ENCODE measurements at regions of chr12 and their contacts with region 1.

Region 1: DNA sequence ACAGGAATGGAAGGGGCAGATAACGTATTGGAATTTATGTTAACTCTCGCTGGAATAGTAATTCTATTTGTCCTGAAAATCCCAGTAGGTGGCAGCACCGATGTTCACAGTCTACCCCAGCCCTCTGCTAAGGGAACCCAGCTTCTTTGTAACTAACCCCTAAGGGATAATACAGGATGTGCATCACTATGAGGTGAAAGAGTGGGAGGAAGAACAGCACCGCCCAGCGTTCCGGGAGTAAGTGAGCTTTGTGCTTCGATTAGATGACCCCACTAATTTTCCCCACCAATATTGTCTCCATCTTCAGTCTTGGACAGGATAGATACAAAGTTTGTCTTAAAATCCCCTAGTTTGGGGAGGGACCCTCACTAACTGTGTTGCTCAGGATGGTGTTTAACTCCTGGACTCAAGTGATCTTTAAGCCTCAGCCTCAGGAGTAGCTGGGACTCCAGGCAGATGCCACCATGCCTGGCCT is 2.7 kb downstream of the SLC2A3 start:
- DNase-seq: peak; percentile 96
- ATAC-seq: peak; percentile 84
- H3K4me3 ChIP-seq: peak overlapping the region; percentile 97
- H3K27ac ChIP-seq: peak overlapping the region; percentile 68
- H3K4me1 ChIP-seq: peaks cover 5% of the 10 kb centered on the region
- H3K27me3 ChIP-seq: no peaks in the 10 kb centered on the region
- CTCF ChIP-seq: peak; percentile 77
- POLR2A ChIP-seq: peak; percentile 85
- RAD21 ChIP-seq: peak; percentile 83

Region 2: DNA sequence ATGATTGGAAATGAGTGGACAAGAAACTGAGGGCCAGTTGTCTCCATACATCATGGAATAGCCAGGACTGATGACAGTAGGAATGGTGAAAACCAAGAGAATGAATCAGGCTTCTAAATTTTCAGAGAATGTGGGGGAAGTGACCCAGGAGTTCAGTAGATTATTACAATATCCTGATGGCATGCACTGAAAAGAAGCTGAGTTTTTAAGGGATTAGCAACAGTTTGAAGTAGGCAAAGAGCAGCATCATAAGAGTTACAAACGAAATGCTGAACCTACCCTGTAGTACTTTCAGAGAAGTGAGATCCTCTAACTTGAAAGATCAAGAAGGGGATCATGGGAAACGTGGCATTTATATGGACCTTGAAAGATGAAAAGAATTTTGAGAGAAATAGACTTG is 73.7 kb before region 1 on chr12:
- CTCF ChIA-PET with region 1: interaction called, 10 read pairs
- POLR2A ChIA-PET with region 1: no interaction called
- dilution Hi-C with region 1: no loop called
- in situ Hi-C with region 1: no loop called
- intact Hi-C with region 1: loop called (anchors 1 kb)
- DNase-seq: peak; percentile 81
- ATAC-seq: peak; percentile 58
- H3K4me3 ChIP-seq: no peak overlapping the region
- H3K27ac ChIP-seq: peak overlapping the region; percentile 43
- H3K4me1 ChIP-seq: peaks cover 3% of the 10 kb centered on the region
- H3K27me3 ChIP-seq: no peaks in the 10 kb centered on the region
- CTCF ChIP-seq: no peak
- POLR2A ChIP-seq: no peak
- RAD21 ChIP-seq: no peak

Region 3: DNA sequence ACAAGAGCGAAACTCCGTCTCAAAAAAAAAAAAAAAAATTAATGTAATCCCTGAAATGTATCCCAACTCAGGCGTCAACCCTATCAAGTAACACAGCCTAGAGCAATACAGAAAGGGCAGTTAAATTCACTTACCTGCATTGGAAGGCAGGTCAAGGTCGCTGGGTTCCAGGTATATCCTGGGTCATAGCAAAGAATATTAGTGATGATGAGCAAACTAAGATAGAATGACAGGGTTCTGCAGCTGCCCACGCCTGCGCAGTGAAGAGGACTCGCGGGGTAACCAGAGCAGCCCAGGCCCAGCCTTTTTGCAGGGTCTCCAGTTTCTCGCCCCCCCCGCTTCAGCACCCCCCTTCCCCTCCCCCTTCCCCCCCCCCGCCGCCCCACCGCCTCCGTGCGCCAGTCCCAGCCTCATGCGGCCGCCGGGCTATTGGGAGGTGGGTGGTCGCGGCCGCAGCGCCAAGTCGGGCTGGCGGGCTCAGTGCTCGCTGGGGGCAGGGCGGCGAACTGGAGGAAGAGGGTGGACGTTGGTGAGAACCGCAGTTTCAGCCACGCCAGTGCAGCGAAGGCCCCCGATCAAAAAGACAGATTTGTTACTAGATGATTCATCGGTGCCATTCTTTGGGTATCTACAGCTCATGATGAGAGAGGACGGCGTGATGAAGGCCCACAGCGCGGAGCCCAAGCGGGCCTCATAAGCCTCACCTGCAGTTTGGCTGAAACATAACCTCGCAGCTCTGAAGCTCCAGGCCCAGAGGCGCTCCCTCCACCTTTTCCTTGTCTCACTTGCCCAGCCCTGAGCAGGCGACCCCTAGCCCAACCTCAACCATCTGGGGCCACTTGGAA is 17.5 kb before region 1 on chr12:
- CTCF ChIA-PET with region 1: no interaction called
- POLR2A ChIA-PET with region 1: interaction called, 10 read pairs
- dilution Hi-C with region 1: no loop called
- in situ Hi-C with region 1: no loop called
- intact Hi-C with region 1: no loop called
- DNase-seq: no peak
- ATAC-seq: peak; percentile 54
- H3K4me3 ChIP-seq: peak overlapping the region; percentile 26; the same call in 1 of the 2 replicates
- H3K27ac ChIP-seq: no peak overlapping the region
- H3K4me1 ChIP-seq: peaks cover 2% of the 10 kb centered on the region; the same call in 1 of the 2 replicates
- H3K27me3 ChIP-seq: no peaks in the 10 kb centered on the region
- CTCF ChIP-seq: no peak
- POLR2A ChIP-seq: no peak
- RAD21 ChIP-seq: no peak

Region 4: DNA sequence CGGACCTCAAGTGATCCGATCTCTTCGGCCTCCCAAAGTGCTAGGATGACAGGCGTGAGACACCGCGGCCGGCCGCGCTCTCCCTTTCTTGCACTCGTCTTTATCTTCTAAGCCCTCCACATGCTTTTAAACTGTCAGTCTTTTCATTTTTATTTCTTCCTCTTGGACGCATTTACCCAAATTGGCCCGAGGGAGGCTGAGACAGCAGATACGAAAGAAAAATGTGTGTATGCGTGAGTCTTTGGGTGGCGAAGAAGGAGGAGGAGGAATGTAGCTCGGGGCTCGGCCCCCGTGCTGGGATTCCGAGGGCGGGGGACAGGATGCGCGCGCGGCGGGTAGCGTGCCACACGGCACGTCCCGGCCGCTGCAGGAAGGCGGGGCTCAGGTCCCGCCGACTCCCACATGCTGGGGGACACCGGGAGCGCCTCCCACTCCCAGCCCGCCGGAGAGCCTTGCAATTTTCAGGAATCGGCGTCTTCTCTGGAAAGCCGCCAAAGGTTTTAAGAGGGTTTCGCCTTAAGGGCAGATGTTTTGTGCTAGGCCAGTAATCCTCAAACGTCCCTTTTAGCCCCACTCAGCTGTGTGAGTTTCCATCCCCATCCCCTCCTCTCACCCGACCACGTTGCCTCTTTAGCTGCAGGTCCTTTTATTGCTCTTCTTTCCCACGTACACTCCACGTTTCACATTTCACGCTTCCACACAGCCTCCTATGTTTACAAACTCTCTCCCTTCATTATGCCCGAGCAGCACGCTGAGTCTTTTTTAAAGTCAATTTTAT is 37.4 kb after region 1 on chr12:
- CTCF ChIA-PET with region 1: interaction called, 5 read pairs
- POLR2A ChIA-PET with region 1: interaction called, 7 read pairs
- dilution Hi-C with region 1: no loop called
- in situ Hi-C with region 1: loop called (anchors 5 kb)
- intact Hi-C with region 1: loop called (anchors 1 kb)
- DNase-seq: peak; percentile 94
- ATAC-seq: peak; percentile 97
- H3K4me3 ChIP-seq: peak overlapping the region; percentile 42
- H3K27ac ChIP-seq: peak overlapping the region; percentile 96
- H3K4me1 ChIP-seq: peaks cover 6% of the 10 kb centered on the region
- H3K27me3 ChIP-seq: no peaks in the 10 kb centered on the region
- CTCF ChIP-seq: no peak
- POLR2A ChIP-seq: peak; percentile 72
- RAD21 ChIP-seq: peak; percentile 22

Region 5: GRCh38 chr12:8032242-8033152 is 99.2 kb after region 1 on chr12 and contains the start of gene FOXJ2:
- CTCF ChIA-PET with region 1: interaction called, 3 read pairs
- POLR2A ChIA-PET with region 1: interaction called, 4 read pairs
- dilution Hi-C with region 1: no loop called
- in situ Hi-C with region 1: no loop called
- intact Hi-C with region 1: loop called (anchors 1 kb)
- DNase-seq: peak; percentile 58
- ATAC-seq: peak; percentile 92
- H3K4me3 ChIP-seq: peak within 1 kb of the TSS; percentile 84
- H3K27ac ChIP-seq: peak within 1 kb of the TSS; percentile 88
- H3K4me1 ChIP-seq: peaks cover 16% of the 10 kb centered on the region
- H3K27me3 ChIP-seq: no peaks in the 10 kb centered on the region
- CTCF ChIP-seq: no peak
- POLR2A ChIP-seq: peak; percentile 74
- RAD21 ChIP-seq: no peak
- total RNA-seq, gene FOXJ2: 3.0 and 3.9 TPM in 2 replicates

Measured in IMR-90 (cell line).